B cell (primary cell): ENCODE measurements at regions of chr16 and their contacts with region 1.

Region 1: GRCh38 chr16:9008601-9009260 is 45.0 kb upstream of the USP7 start:
- DNase-seq: peak; percentile 81
- ATAC-seq: peak; percentile 85
- H3K4me3 ChIP-seq: peak overlapping the region in 3 of 5 experiments; percentile 3 to 29 (median 28)
- H3K4me3 Mint-ChIP-seq: peak overlapping the region; percentile 73
- H3K27ac ChIP-seq: no peak overlapping the region
- H3K27ac Mint-ChIP-seq: peak overlapping the region; percentile 65
- H3K4me1 ChIP-seq: peaks cover 8 to 10% of the 10 kb centered on the region in 2 donors
- H3K4me1 Mint-ChIP-seq: peaks cover 8% of the 10 kb centered on the region
- H3K27me3 ChIP-seq: peaks cover 0 to 17% (median 6%) of the 10 kb centered on the region in 4 experiments
- H3K27me3 Mint-ChIP-seq: peaks cover 27% of the 10 kb centered on the region
- CTCF ChIP-seq: peak; percentile 78

Region 2: GRCh38 chr16:8567750-8568617 is 440.7 kb before region 1 on chr16:
- CTCF ChIA-PET with region 1: interaction called, 16 read pairs
- POLR2A ChIA-PET with region 1: no interaction called
- intact Hi-C with region 1: no loop called
- DNase-seq: peak; percentile 86
- ATAC-seq: peak; percentile 93
- H3K4me3 ChIP-seq: no peak overlapping the region
- H3K4me3 Mint-ChIP-seq: no peak overlapping the region
- H3K27ac ChIP-seq: no peak overlapping the region
- H3K27ac Mint-ChIP-seq: peak overlapping the region; percentile 34
- H3K4me1 ChIP-seq: peaks cover 0 to 6% of the 10 kb centered on the region in 2 donors
- H3K4me1 Mint-ChIP-seq: peaks cover 7% of the 10 kb centered on the region
- H3K27me3 ChIP-seq: peaks cover 0 to 3% (median 0%) of the 10 kb centered on the region in 4 experiments
- H3K27me3 Mint-ChIP-seq: peaks cover 16% of the 10 kb centered on the region
- CTCF ChIP-seq: peak; percentile 100

Region 3: DNA sequence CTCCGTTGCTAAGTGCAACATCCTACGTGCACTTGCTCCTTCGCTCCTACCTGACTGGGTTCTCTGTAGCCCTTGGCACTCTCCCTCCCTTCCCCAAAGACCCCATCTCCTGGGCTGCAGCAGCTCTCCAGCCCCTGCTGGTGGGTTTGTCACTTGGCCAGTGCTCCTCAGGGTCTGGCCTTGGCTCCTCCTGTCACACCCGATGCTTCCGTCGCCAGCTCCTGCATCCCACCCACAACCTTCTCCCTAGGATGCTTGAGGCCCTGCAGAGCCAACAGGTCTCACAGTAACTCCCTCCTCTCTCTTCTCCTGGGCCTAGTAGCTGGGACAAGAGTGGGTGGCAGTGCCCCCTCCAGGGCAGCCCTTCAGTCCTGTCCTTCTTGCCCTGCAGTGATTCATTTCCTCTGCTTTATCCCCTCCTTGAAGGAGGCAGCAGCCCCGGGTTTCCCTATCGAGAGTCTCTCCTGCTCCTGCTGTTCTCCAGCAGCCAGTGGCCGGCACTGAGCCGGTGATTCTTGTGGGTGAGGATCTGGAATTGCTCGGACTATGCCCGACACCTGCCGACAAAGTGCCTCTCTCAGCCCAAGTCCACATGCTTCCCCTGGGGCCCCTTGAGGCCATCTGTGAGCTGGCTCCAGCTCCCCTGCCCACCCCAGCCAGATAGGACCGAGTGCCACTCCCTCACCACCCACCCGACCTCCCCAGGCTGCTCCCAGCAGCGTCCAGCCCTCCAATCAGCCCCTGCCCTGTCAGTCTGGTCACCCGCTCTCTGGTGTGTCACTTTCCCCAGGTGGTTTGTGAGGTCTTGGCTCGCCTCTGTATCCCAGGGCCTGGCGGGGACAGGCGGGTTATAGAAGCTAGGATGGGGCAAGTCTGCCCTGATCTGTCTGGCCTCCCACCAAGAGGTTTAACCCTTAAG is 122.8 kb before region 1 on chr16:
- CTCF ChIA-PET with region 1: interaction called, 44 read pairs
- POLR2A ChIA-PET with region 1: no interaction called
- intact Hi-C with region 1: loop called (anchors 1 kb)
- DNase-seq: peak; percentile 39
- ATAC-seq: no peak
- H3K4me3 ChIP-seq: no peak overlapping the region
- H3K4me3 Mint-ChIP-seq: no peak overlapping the region
- H3K27ac ChIP-seq: no peak overlapping the region
- H3K27ac Mint-ChIP-seq: peak overlapping the region; percentile 71
- H3K4me1 ChIP-seq: peaks cover 5 to 21% of the 10 kb centered on the region in 2 donors
- H3K4me1 Mint-ChIP-seq: peaks cover 23% of the 10 kb centered on the region
- H3K27me3 ChIP-seq: peaks cover 0 to 11% (median 5%) of the 10 kb centered on the region in 4 experiments
- H3K27me3 Mint-ChIP-seq: peaks cover 12% of the 10 kb centered on the region
- CTCF ChIP-seq: no peak

Region 4: GRCh38 chr16:8899709-8900317 is 108.9 kb before region 1 on chr16:
- CTCF ChIA-PET with region 1: interaction called, 13 read pairs
- POLR2A ChIA-PET with region 1: no interaction called
- intact Hi-C with region 1: loop called (anchors 1 kb)
- DNase-seq: no peak
- ATAC-seq: no peak
- H3K4me3 ChIP-seq: no peak overlapping the region
- H3K4me3 Mint-ChIP-seq: no peak overlapping the region
- H3K27ac ChIP-seq: no peak overlapping the region
- H3K27ac Mint-ChIP-seq: no peak overlapping the region
- H3K4me1 ChIP-seq: no peaks in the 10 kb centered on the region
- H3K4me1 Mint-ChIP-seq: no peaks in the 10 kb centered on the region
- H3K27me3 ChIP-seq: no peaks in the 10 kb centered on the region
- H3K27me3 Mint-ChIP-seq: no peaks in the 10 kb centered on the region
- CTCF ChIP-seq: no peak

Region 5: DNA sequence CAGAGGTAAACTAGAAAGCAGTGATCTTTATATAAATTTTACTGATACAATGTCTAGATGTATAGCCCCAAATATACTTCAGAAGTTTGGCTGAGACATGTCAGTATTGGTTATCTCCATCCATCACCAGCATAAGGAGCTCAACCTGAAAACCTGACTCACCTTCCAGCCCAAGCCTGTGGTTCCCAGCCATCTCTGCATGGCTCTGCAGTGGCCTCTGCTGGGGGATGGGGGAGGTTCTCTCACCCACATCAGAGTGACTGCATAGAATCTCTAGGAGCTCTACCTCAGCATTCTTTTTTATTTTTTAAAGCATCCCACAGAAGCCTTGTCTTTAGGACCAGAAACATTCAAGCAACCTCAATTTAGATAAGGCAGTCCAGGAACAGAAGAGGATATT is 72.3 kb before region 1 on chr16:
- CTCF ChIA-PET with region 1: interaction called, 67 read pairs
- POLR2A ChIA-PET with region 1: interaction called, 3 read pairs
- intact Hi-C with region 1: loop called (anchors 1 kb)
- DNase-seq: peak; percentile 69
- ATAC-seq: peak; percentile 89
- H3K4me3 ChIP-seq: no peak overlapping the region
- H3K4me3 Mint-ChIP-seq: no peak overlapping the region
- H3K27ac ChIP-seq: no peak overlapping the region
- H3K27ac Mint-ChIP-seq: peak overlapping the region; percentile 7
- H3K4me1 ChIP-seq: peaks cover 58 to 63% of the 10 kb centered on the region in 2 donors
- H3K4me1 Mint-ChIP-seq: peaks cover 81% of the 10 kb centered on the region
- H3K27me3 ChIP-seq: no peaks in the 10 kb centered on the region
- H3K27me3 Mint-ChIP-seq: no peaks in the 10 kb centered on the region
- CTCF ChIP-seq: peak; percentile 73

Region 6: GRCh38 chr16:8963825-8964441 is 44.8 kb before region 1 on chr16 and contains the start of gene USP7:
- CTCF ChIA-PET with region 1: interaction called, 15 read pairs
- POLR2A ChIA-PET with region 1: interaction called, 4 read pairs
- intact Hi-C with region 1: no loop called
- DNase-seq: peak; percentile 93
- ATAC-seq: peak; percentile 88
- H3K4me3 ChIP-seq: peak within 1 kb of the TSS; percentile 56 to 80 (median 65)
- H3K4me3 Mint-ChIP-seq: peak within 1 kb of the TSS; percentile 90
- H3K27ac ChIP-seq: peak within 1 kb of the TSS; percentile 87 to 89
- H3K27ac Mint-ChIP-seq: peak within 1 kb of the TSS; percentile 95
- H3K4me1 ChIP-seq: peaks cover 35 to 39% of the 10 kb centered on the region in 2 donors
- H3K4me1 Mint-ChIP-seq: peaks cover 39% of the 10 kb centered on the region
- H3K27me3 ChIP-seq: peaks cover 0 to 4% (median 0%) of the 10 kb centered on the region in 4 experiments
- H3K27me3 Mint-ChIP-seq: peaks cover 5% of the 10 kb centered on the region
- CTCF ChIP-seq: no peak
- total RNA-seq, gene USP7: 223 and 232 TPM in 2 replicates

Region 7: DNA sequence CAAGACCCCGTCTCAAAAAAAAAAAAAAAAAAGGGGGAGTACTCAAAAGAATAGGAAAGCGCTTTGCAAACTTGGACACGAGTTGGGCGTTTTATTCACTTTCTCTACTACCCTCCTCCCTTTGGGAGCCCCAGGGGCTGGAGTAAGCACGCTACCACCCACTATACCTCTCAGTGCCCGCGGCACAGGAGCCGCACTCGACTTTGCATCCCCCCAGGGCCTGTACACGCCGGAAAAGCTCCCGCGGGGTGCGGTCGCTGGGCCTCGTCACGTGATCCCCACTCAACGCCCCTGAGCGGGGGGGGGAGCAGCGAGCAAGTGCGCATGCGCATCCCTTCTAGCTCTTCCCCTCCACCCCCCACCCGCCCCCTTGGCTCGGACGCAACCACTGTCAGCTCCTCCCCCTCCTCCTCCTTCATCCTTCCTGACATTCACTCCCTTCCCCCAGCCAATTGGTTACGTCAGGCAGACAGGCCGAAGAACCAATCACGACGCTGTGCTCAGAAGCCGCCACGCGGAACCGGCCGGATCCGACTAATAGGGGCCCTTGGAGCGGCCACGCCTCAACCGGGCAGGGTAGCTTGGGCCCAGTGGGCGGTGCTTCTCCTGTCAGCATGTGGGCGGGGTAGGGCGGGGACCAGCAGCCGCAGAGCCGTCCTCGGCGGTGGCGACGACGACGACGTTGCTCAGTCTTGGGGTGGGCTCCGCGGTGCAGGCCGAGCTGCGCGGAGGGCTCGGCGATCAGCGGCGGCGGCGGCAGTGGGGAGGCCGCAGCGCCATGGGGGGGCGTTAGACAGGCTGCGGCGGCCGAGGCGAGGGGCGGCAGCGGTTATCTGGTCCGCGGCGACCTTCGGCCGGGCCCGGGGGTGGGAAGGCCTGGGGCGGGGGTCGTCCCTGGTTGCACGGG is 82.5 kb after region 1 on chr16 and contains the start of gene HAPSTR1:
- CTCF ChIA-PET with region 1: interaction called, 6 read pairs
- POLR2A ChIA-PET with region 1: interaction called, 10 read pairs
- intact Hi-C with region 1: no loop called
- DNase-seq: peak; percentile 100
- ATAC-seq: peak; percentile 84
- H3K4me3 ChIP-seq: peak within 1 kb of the TSS; percentile 84 to 95 (median 88)
- H3K4me3 Mint-ChIP-seq: peak within 1 kb of the TSS; percentile 97
- H3K27ac ChIP-seq: peak within 1 kb of the TSS; percentile 90 to 98
- H3K27ac Mint-ChIP-seq: peak within 1 kb of the TSS; percentile 98
- H3K4me1 ChIP-seq: peaks cover 31 to 37% of the 10 kb centered on the region in 2 donors
- H3K4me1 Mint-ChIP-seq: peaks cover 38% of the 10 kb centered on the region
- H3K27me3 ChIP-seq: no peaks in the 10 kb centered on the region
- H3K27me3 Mint-ChIP-seq: no peaks in the 10 kb centered on the region
- CTCF ChIP-seq: no peak
- total RNA-seq, gene HAPSTR1: 99.2 and 101 TPM in 2 replicates